ENCODE measurements at regions of chr15 and their contacts with region 1.

Region 1: DNA sequence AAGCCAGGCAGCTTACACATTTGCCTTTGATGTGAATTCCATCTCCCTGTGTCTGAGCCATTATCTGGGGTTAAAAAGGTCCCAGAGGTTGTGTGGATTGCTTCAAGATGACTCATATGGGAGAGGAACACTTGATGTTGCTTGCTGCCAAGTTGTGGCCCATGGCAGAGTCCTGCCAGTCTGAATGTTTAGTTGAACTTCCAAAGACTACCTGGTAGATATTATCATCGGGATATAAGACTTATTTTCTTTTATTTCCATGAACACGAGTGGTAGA is 85.6 kb downstream of the TJP1 start:
- DNase-seq: no peak
- ATAC-seq: peak; percentile 47 to 91

Region 2: DNA sequence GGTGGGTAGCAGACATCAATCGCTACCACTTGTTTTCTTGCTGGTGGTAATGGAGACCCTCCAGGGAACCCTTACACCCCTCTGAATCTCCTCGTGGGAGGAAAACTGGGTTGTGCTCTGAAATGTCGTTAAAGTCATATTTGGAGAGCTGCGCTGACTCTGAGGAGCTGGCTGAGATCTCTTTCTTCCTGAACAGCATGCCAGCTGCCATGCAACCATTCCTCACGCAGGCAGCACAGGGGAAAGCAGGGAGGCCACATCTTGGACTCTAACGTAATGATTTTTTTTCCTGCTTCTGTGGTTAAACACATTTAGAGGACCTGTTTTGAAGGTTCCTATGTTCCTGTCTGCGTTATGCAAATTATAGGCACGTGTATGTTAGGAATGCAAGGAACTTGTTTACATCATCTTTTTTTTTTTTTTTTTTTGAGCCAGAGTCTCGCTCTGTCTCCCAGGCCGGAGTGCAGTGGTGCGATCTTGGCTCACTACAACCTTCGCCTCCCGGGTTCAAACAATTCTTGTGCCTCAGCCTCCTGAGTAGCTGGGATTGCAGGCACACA is 71.2 kb before region 1 on chr15:
- intact Hi-C with region 1: no loop called
- DNase-seq: no peak
- ATAC-seq: no peak

Region 3: DNA sequence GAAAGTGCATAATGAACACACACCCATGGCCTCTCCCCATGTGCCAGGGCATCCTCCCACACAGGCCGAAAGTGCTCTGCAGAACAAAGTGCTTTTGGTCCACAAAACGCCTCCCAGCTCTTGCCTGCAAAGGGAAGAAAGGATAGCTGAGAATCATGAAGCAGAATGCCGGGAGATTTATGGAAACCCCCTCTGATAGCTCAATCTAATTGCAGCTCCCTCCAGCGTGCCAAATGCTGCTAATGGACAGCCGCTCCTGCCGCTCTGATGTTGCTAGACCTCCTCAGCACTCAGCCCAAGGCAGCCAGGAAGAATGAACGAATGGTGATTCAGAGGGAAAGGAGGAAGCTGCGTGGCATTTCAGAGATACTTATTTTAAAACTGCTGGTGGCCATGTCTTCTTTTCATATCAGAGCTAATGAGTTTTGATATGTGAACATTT is 59.7 kb before region 1 on chr15:
- intact Hi-C with region 1: no loop called
- DNase-seq: no peak
- ATAC-seq: peak in 1 of 2 donors; percentile 21

Region 4: DNA sequence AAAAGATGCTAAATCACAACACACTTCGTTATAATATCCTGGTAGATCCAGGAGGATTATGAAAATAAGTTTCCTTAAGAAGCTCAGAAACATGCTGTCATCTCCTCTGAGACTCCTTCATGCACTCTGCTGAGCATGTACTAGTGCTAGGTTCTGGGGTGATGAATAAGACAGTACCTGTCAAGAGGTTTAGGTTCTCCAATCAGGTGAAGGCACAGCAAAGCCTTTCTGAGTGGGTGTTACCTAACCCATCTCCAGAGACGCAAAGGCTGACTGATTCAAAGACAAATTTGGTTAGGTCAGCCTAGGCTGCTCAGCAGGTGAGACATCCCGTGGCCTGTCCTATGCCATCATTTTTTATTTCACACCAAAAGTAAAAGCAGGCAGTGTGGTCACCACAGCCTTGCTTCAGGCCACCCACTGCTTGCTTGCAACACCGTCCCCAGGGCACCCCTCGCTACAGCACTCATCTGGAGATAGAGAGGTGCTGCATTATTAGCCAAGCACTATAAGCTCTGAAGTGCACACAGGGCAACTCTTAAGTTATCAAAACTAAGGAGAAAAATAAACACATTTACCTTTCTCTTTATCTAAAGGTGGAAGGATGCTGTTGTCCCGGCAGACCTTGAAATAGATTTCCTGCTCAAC is 31.6 kb before region 1 on chr15:
- intact Hi-C with region 1: loop called in 1 of 2 experiments (anchors 5 kb)
- DNase-seq: no peak
- ATAC-seq: no peak

Region 5: GRCh38 chr15:29792426-29793159 is 55.9 kb after region 1 on chr15:
- intact Hi-C with region 1: no loop called
- DNase-seq: no peak
- ATAC-seq: no peak

Region 6: GRCh38 chr15:29978411-29979382 is 242.0 kb after region 1 on chr15:
- intact Hi-C with region 1: no loop called
- DNase-seq: no peak
- ATAC-seq: peak in 1 of 2 donors; percentile 50

Measured in left cardiac atrium (tissue), 4 donors.